Endothelial cell of umbilical vein (primary cell): ENCODE measurements at regions of chr6 and their contacts with region 1.

Region 1: DNA sequence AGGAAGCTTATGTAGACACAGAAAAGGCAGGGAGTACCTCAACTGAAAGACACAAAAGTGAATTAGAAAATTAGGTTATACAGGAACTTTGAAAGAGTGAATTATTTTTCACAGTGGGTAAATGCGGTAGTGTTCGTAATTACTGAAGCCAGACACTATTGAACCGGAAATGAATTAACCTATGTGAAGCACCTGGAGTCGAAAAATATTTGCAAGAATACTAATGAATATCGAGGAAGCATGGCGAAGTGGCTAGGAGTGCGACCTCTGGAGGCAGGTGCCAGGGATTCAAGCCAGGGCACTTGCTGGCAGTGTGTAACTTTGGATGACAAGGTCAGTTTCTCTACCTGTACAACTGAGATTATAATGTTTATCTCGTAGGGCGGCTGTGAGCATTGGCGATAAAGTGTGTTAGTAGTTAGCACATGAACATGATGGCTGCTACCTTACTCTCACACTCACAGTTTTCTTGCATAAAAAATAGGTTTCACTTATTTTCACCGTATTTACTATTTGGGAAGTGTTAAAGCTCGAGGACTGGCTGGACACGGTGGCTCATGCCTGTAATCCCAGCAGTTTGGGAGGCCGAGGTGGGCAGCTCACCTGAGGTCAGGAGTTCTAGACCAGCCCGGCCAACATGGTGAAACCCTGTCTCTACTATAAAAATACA is 567 bp upstream of the SLC18B1 start:
- DNase-seq: peak; percentile 86
- H3K4me3 ChIP-seq: peak overlapping the region; percentile 95 to 97 (median 96)
- H3K27ac ChIP-seq: peak overlapping the region; percentile 26
- H3K4me1 ChIP-seq: peaks cover 3% of the 10 kb centered on the region
- H3K27me3 ChIP-seq: peaks cover 0 to 3% of the 10 kb centered on the region in 2 experiments
- CTCF ChIP-seq: peak; percentile 78 to 84
- POLR2A ChIP-seq: no peak

Region 2: GRCh38 chr6:132365281-132365907 is 433.6 kb before region 1 on chr6:
- CTCF ChIA-PET with region 1: no interaction called
- POLR2A ChIA-PET with region 1: no interaction called
- dilution Hi-C with region 1: no loop called
- intact Hi-C with region 1: loop called (anchors 10 kb)
- DNase-seq: no peak
- H3K4me3 ChIP-seq: no peak overlapping the region
- H3K27ac ChIP-seq: no peak overlapping the region
- H3K4me1 ChIP-seq: no peaks in the 10 kb centered on the region
- H3K27me3 ChIP-seq: peaks cover 15 to 27% of the 10 kb centered on the region in 2 experiments
- CTCF ChIP-seq: no peak
- POLR2A ChIP-seq: no peak

Region 3: DNA sequence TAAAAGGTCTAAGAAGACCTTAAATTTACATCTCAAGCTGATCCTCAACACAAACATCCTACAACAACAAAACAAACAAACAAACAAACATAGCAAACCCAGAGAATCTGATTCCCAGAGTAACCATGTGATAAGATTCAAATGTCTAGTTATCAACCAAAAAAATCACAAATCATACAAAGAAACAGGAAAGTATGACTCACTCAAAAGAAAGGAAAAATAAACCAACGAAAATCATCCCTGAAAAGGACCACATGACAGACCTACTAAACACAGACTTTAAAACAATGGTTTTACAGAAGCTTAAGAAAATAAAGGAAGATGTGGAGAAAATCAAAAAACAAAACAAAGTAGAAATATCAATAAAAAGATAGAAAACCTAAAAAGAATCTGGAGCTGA is 103.2 kb before region 1 on chr6:
- CTCF ChIA-PET with region 1: interaction called, 10 read pairs
- POLR2A ChIA-PET with region 1: no interaction called
- dilution Hi-C with region 1: no loop called
- intact Hi-C with region 1: no loop called
- DNase-seq: peak; percentile 47
- H3K4me3 ChIP-seq: no peak overlapping the region
- H3K27ac ChIP-seq: no peak overlapping the region
- H3K4me1 ChIP-seq: peaks cover 9% of the 10 kb centered on the region
- H3K27me3 ChIP-seq: peaks cover 1 to 4% of the 10 kb centered on the region in 2 experiments
- CTCF ChIP-seq: no peak
- POLR2A ChIP-seq: no peak

Region 4: GRCh38 chr6:132751828-132752227 is 47.2 kb before region 1 on chr6:
- CTCF ChIA-PET with region 1: interaction called, 6 read pairs
- POLR2A ChIA-PET with region 1: no interaction called
- dilution Hi-C with region 1: no loop called
- intact Hi-C with region 1: loop called (anchors 1 kb)
- DNase-seq: no peak
- H3K4me3 ChIP-seq: no peak overlapping the region
- H3K27ac ChIP-seq: no peak overlapping the region
- H3K4me1 ChIP-seq: no peaks in the 10 kb centered on the region
- H3K27me3 ChIP-seq: peaks cover 0 to 5% of the 10 kb centered on the region in 2 experiments
- CTCF ChIP-seq: no peak
- POLR2A ChIP-seq: no peak

Region 5: GRCh38 chr6:132780770-132781371 is 18.1 kb before region 1 on chr6:
- CTCF ChIA-PET with region 1: interaction called, 17 read pairs
- POLR2A ChIA-PET with region 1: no interaction called
- dilution Hi-C with region 1: no loop called
- intact Hi-C with region 1: no loop called
- DNase-seq: no peak
- H3K4me3 ChIP-seq: no peak overlapping the region
- H3K27ac ChIP-seq: no peak overlapping the region
- H3K4me1 ChIP-seq: no peaks in the 10 kb centered on the region
- H3K27me3 ChIP-seq: no peaks in the 10 kb centered on the region
- CTCF ChIP-seq: peak in 1 of 2 donors; percentile 11
- POLR2A ChIP-seq: no peak

Region 6: DNA sequence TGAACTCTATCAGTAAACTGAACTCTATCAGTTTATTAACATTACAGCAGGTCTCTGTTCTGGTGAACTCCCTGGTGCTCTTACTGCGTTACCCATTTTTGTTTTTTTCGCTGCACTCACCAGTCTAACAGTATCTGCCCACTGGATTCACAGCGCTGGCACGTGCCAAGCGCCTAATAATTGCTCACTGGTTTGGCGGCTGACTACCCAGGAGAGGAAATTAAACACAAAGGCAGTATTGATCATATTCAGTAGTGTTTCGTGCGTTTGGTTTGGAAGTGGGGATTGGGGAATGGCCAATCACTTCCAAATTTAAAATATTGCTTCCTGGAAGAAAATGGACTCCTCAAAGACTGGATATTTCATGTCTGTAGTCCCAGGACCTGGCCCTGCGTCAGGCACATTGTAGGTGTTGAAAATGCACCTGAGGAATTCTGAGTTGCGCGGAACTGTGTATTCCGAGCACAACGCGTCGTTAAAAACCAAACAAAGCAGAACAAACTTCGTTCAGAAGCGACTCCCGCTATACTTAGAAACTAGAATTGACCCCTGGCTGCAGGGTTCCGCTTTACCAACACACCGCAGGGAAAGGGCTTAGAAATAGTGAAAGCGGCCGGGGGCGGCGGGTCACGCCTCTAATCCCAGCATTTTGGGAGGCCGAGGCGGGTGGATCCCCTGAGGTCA is 14.3 kb after region 1 on chr6:
- CTCF ChIA-PET with region 1: interaction called, 31 read pairs
- POLR2A ChIA-PET with region 1: interaction called, 16 read pairs
- dilution Hi-C with region 1: no loop called
- intact Hi-C with region 1: loop called (anchors 1 kb)
- DNase-seq: peak; percentile 75
- H3K4me3 ChIP-seq: peak overlapping the region; percentile 47 to 80 (median 55)
- H3K27ac ChIP-seq: peak overlapping the region; percentile 63
- H3K4me1 ChIP-seq: peaks cover 24% of the 10 kb centered on the region
- H3K27me3 ChIP-seq: peaks cover 4 to 5% of the 10 kb centered on the region in 2 experiments
- CTCF ChIP-seq: no peak
- POLR2A ChIP-seq: peak; percentile 38

Region 7: GRCh38 chr6:132850310-132850709 is 51.3 kb after region 1 on chr6:
- CTCF ChIA-PET with region 1: no interaction called
- POLR2A ChIA-PET with region 1: no interaction called
- dilution Hi-C with region 1: no loop called
- intact Hi-C with region 1: no loop called
- DNase-seq: no peak
- H3K4me3 ChIP-seq: no peak overlapping the region
- H3K27ac ChIP-seq: no peak overlapping the region
- H3K4me1 ChIP-seq: no peaks in the 10 kb centered on the region
- H3K27me3 ChIP-seq: peaks cover 0 to 1% of the 10 kb centered on the region in 2 experiments
- CTCF ChIP-seq: no peak
- POLR2A ChIP-seq: no peak

Region 8: GRCh38 chr6:132973514-132973993 is 174.6 kb after region 1 on chr6:
- CTCF ChIA-PET with region 1: no interaction called
- POLR2A ChIA-PET with region 1: no interaction called
- dilution Hi-C with region 1: no loop called
- intact Hi-C with region 1: no loop called
- DNase-seq: no peak
- H3K4me3 ChIP-seq: no peak overlapping the region
- H3K27ac ChIP-seq: no peak overlapping the region
- H3K4me1 ChIP-seq: no peaks in the 10 kb centered on the region
- H3K27me3 ChIP-seq: peaks cover 2 to 5% of the 10 kb centered on the region in 2 experiments
- CTCF ChIP-seq: no peak
- POLR2A ChIP-seq: no peak